ENCODE measurements at regions of chr3 and their contacts with region 1.

Region 1: GRCh38 chr3:167380004-167380689 is at the start of gene ZBBX:
- DNase-seq: peak; percentile 82
- H3K4me3 Mint-ChIP-seq: peak within 1 kb of the TSS; percentile 77
- H3K27ac Mint-ChIP-seq: no peak within 1 kb of the TSS
- H3K4me1 Mint-ChIP-seq: no peaks in the 10 kb centered on the region
- H3K27me3 Mint-ChIP-seq: no peaks in the 10 kb centered on the region
- CTCF ChIP-seq: peak; percentile 69
- total RNA-seq, gene ZBBX: not detected in 2 replicates

Region 2: GRCh38 chr3:167394003-167394402 is 13.9 kb after region 1 on chr3:
- CTCF ChIA-PET with region 1: interaction called, 15 read pairs
- POLR2A ChIA-PET with region 1: no interaction called
- intact Hi-C with region 1: no loop called
- DNase-seq: peak; percentile 11
- H3K4me3 Mint-ChIP-seq: no peak overlapping the region
- H3K27ac Mint-ChIP-seq: no peak overlapping the region
- H3K4me1 Mint-ChIP-seq: no peaks in the 10 kb centered on the region
- H3K27me3 Mint-ChIP-seq: peaks cover 20% of the 10 kb centered on the region
- CTCF ChIP-seq: peak; percentile 12

Region 3: GRCh38 chr3:167684388-167684993 is 304.3 kb after region 1 on chr3:
- CTCF ChIA-PET with region 1: interaction called, 28 read pairs
- POLR2A ChIA-PET with region 1: no interaction called
- intact Hi-C with region 1: no loop called
- DNase-seq: peak; percentile 78
- H3K4me3 Mint-ChIP-seq: no peak overlapping the region
- H3K27ac Mint-ChIP-seq: no peak overlapping the region
- H3K4me1 Mint-ChIP-seq: no peaks in the 10 kb centered on the region
- H3K27me3 Mint-ChIP-seq: no peaks in the 10 kb centered on the region
- CTCF ChIP-seq: peak; percentile 51

Measured in MCF 10A (cell line).